ENCODE measurements at regions of chr7 and their contacts with region 1.

Region 1: GRCh38 chr7:155205368-155206317 is 92.0 kb upstream of the INSIG1 start:
- DNase-seq: peak; percentile 99
- ATAC-seq: peak; percentile 91
- H3K4me3 ChIP-seq: peak overlapping the region; percentile 76
- H3K27ac ChIP-seq: peak overlapping the region; percentile 97
- H3K4me1 ChIP-seq: peaks cover 23% of the 10 kb centered on the region
- H3K27me3 ChIP-seq: no peaks in the 10 kb centered on the region
- CTCF ChIP-seq: no peak
- EP300 ChIP-seq: peak; percentile 96 to 98
- POLR2A ChIP-seq: peak; percentile 90
- RAD21 ChIP-seq: no peak

Region 2: DNA sequence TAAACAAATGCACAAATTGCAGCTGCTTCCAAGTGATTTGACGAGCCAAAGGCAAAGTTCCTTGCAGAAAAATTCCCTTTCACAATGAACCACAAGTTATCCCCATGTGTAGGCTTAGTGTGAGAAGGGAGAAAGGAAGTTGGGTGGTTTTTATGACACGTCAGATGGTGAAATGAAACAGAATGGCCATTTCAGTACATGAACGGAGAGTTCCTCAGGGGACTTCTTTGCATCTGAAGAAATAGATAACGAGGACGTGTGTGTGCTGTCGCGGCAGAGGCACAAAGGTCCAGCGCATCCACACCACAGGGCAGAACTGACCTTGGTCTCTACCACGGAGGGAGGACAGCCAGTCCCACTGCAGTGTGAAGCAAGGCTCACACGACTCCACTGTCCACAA is 338.6 kb before region 1 on chr7:
- CTCF ChIA-PET with region 1: no interaction called
- POLR2A ChIA-PET with region 1: no interaction called
- RAD21 ChIA-PET with region 1: no interaction called
- SMC1A ChIA-PET with region 1: no interaction called
- in situ Hi-C with region 1: no loop called
- intact Hi-C with region 1: loop called (anchors 5 kb)
- DNase-seq: peak; percentile 59
- ATAC-seq: peak; percentile 80
- H3K4me3 ChIP-seq: no peak overlapping the region
- H3K27ac ChIP-seq: no peak overlapping the region
- H3K4me1 ChIP-seq: peaks cover 8% of the 10 kb centered on the region
- H3K27me3 ChIP-seq: no peaks in the 10 kb centered on the region
- CTCF ChIP-seq: no peak
- EP300 ChIP-seq: peak; percentile 58 to 77; a peak in 2 of 4 replicates
- POLR2A ChIP-seq: no peak
- RAD21 ChIP-seq: no peak

Region 3: GRCh38 chr7:155190688-155191087 is 15.0 kb before region 1 on chr7:
- CTCF ChIA-PET with region 1: interaction called, 12 read pairs
- POLR2A ChIA-PET with region 1: no interaction called
- RAD21 ChIA-PET with region 1: interaction called, 6 read pairs
- SMC1A ChIA-PET with region 1: interaction called, 4 read pairs
- in situ Hi-C with region 1: no loop called
- intact Hi-C with region 1: no loop called
- DNase-seq: no peak
- ATAC-seq: peak; percentile 80
- H3K4me3 ChIP-seq: no peak overlapping the region
- H3K27ac ChIP-seq: no peak overlapping the region
- H3K4me1 ChIP-seq: peaks cover 7% of the 10 kb centered on the region; the same call in 1 of the 2 replicates
- H3K27me3 ChIP-seq: no peaks in the 10 kb centered on the region
- CTCF ChIP-seq: peak; percentile 76 to 91 (median 82)
- EP300 ChIP-seq: no peak
- POLR2A ChIP-seq: no peak
- RAD21 ChIP-seq: peak; percentile 93

Region 4: GRCh38 chr7:155234950-155235789 is 29.5 kb after region 1 on chr7:
- CTCF ChIA-PET with region 1: no interaction called
- POLR2A ChIA-PET with region 1: no interaction called
- RAD21 ChIA-PET with region 1: no interaction called
- SMC1A ChIA-PET with region 1: no interaction called
- in situ Hi-C with region 1: no loop called
- intact Hi-C with region 1: no loop called
- DNase-seq: no peak
- ATAC-seq: peak; percentile 63
- H3K4me3 ChIP-seq: no peak overlapping the region
- H3K27ac ChIP-seq: no peak overlapping the region
- H3K4me1 ChIP-seq: no peaks in the 10 kb centered on the region
- H3K27me3 ChIP-seq: no peaks in the 10 kb centered on the region; a peak in 2 of 4 replicates
- CTCF ChIP-seq: no peak
- EP300 ChIP-seq: no peak
- POLR2A ChIP-seq: no peak
- RAD21 ChIP-seq: no peak

Region 5: GRCh38 chr7:155298834-155299534 is 93.3 kb after region 1 on chr7:
- CTCF ChIA-PET with region 1: interaction called, 17 read pairs
- POLR2A ChIA-PET with region 1: interaction called, 86 read pairs
- RAD21 ChIA-PET with region 1: interaction called, 25 read pairs
- SMC1A ChIA-PET with region 1: interaction called, 16 read pairs
- in situ Hi-C with region 1: loop called (anchors 10 kb)
- intact Hi-C with region 1: loop called (anchors 1 kb)
- DNase-seq: peak; percentile 92
- ATAC-seq: peak; percentile 85
- H3K4me3 ChIP-seq: peak overlapping the region; percentile 94
- H3K27ac ChIP-seq: peak overlapping the region; percentile 88
- H3K4me1 ChIP-seq: peaks cover 6% of the 10 kb centered on the region
- H3K27me3 ChIP-seq: no peaks in the 10 kb centered on the region
- CTCF ChIP-seq: no peak
- EP300 ChIP-seq: peak; percentile 43 to 57; a peak in 3 of 4 replicates
- POLR2A ChIP-seq: peak; percentile 84
- RAD21 ChIP-seq: no peak

Region 6: GRCh38 chr7:155322530-155322929 is 116.9 kb after region 1 on chr7:
- CTCF ChIA-PET with region 1: no interaction called
- POLR2A ChIA-PET with region 1: no interaction called
- RAD21 ChIA-PET with region 1: no interaction called
- SMC1A ChIA-PET with region 1: no interaction called
- in situ Hi-C with region 1: no loop called
- intact Hi-C with region 1: no loop called
- DNase-seq: no peak
- ATAC-seq: no peak
- H3K4me3 ChIP-seq: no peak overlapping the region
- H3K27ac ChIP-seq: no peak overlapping the region
- H3K4me1 ChIP-seq: no peaks in the 10 kb centered on the region
- H3K27me3 ChIP-seq: no peaks in the 10 kb centered on the region
- CTCF ChIP-seq: no peak
- EP300 ChIP-seq: no peak
- POLR2A ChIP-seq: no peak
- RAD21 ChIP-seq: no peak

Region 7: DNA sequence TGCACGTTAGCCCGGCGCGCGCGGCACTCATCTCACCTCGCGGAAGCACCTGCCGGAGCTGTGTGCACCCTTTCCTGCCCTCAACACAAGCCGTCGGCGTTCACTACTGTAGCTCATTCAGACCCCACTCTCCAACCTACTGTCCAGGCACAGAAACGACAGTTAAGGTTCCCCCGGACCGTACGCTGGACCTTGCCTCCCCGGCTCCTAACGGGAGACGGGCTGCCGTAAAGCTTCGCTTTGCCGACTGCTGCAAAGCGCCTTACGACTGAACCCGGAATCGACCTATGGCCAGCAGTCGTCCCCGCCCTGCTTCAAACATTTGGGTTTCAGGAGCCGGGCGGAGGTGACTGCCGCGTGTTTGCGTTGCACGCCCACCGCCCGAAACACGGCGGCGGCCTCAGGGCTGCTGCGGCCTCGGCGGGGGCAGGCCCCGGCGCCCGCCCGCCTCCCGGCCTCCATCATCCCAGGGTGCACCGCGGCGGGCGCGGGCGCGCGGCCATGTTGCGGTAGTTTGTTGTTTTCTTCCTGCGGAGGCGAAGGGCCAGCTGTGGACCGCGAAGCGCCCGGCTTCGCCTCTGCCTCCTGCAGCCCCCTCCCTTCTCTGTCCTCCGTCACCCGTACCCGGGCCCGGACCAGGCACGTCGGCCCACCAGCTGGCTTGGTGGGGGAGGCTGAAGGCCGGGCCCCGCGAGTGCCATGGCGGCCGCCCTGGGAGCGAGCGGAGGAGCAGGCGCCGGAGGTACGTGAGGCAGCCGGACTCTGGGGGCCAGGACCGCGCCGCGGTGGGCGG is 438.7 kb after region 1 on chr7 and contains the start of gene RBM33:
- CTCF ChIA-PET with region 1: no interaction called
- POLR2A ChIA-PET with region 1: no interaction called
- RAD21 ChIA-PET with region 1: no interaction called
- SMC1A ChIA-PET with region 1: no interaction called
- in situ Hi-C with region 1: no loop called
- intact Hi-C with region 1: loop called (anchors 10 kb)
- DNase-seq: peak; percentile 41
- ATAC-seq: peak; percentile 89
- H3K4me3 ChIP-seq: peak within 1 kb of the TSS; percentile 80
- H3K27ac ChIP-seq: peak within 1 kb of the TSS; percentile 96
- H3K4me1 ChIP-seq: no peaks in the 10 kb centered on the region
- H3K27me3 ChIP-seq: no peaks in the 10 kb centered on the region
- CTCF ChIP-seq: no peak
- EP300 ChIP-seq: no peak
- POLR2A ChIP-seq: peak; percentile 90
- RAD21 ChIP-seq: no peak
- polyA plus RNA-seq, gene RBM33: 4.7 to 5.6 TPM

Measured in GM12878 (cell line).